Caco-2 (cell line): ENCODE measurements at regions of chr1 and their contacts with region 1.

Region 1: GRCh38 chr1:65924471-65924870 is 131.8 kb downstream of the PDE4B start:
- DNase-seq: no peak
- H3K4me3 ChIP-seq: no peak overlapping the region
- H3K4me3 Mint-ChIP-seq: no peak overlapping the region
- H3K27ac Mint-ChIP-seq: no peak overlapping the region
- H3K4me1 ChIP-seq: no peaks in the 10 kb centered on the region
- H3K4me1 Mint-ChIP-seq: no peaks in the 10 kb centered on the region
- H3K27me3 ChIP-seq: no peaks in the 10 kb centered on the region
- H3K27me3 Mint-ChIP-seq: no peaks in the 10 kb centered on the region
- CTCF ChIP-seq: no peak

Region 2: DNA sequence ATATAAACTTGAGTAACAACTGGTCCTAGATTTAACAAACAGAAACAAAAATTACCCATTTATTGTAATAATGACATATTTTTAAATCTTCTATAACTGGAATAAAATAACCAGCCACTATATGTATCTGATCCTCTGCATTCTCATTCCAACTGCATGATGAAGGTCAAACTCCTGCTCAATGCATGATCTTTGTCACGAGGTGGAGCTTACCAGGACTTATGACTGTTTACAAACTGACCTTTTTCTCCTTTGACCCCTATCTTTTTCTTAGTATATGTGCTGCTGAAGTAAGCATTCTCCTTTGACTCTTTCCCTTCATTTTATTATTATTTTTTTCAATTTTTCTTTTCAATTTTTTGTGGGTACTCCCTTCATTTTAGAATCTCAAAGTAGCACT is 120.4 kb after region 1 on chr1:
- CTCF ChIA-PET with region 1: no interaction called
- POLR2A ChIA-PET with region 1: interaction called, 17 read pairs
- intact Hi-C with region 1: no loop called
- DNase-seq: no peak
- H3K4me3 ChIP-seq: no peak overlapping the region
- H3K4me3 Mint-ChIP-seq: no peak overlapping the region
- H3K27ac Mint-ChIP-seq: no peak overlapping the region
- H3K4me1 ChIP-seq: no peaks in the 10 kb centered on the region
- H3K4me1 Mint-ChIP-seq: no peaks in the 10 kb centered on the region
- H3K27me3 ChIP-seq: no peaks in the 10 kb centered on the region
- H3K27me3 Mint-ChIP-seq: peaks cover 5% of the 10 kb centered on the region
- CTCF ChIP-seq: no peak